ENCODE measurements at regions of chr10 and their contacts with region 1.

Region 1: DNA sequence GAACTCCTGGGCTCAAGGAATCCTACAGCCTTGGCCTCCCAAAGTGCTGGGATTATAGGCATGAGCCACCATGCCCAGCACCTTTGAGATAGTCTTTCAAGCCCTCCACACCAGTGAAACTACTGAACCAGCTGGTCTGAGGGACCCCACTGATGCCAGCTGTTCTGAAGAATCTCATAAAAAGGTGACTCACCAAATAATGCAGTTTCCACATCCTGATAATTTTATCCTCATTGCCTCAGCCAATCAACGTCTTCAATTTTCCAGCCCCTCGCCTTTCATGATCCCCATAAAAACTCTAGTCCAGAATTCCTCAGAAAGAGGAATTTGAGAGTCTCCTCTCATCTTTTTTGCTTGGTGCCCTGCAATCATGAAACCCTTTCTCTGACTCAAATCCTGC is 1691.6 kb upstream of the LRRTM3 start:
- DNase-seq: no peak
- ATAC-seq: no peak
- H3K4me3 ChIP-seq: no peak overlapping the region
- H3K27ac ChIP-seq: no peak overlapping the region
- H3K4me1 ChIP-seq: no peaks in the 10 kb centered on the region
- H3K27me3 ChIP-seq: no peaks in the 10 kb centered on the region
- CTCF ChIP-seq: no peak

Region 2: DNA sequence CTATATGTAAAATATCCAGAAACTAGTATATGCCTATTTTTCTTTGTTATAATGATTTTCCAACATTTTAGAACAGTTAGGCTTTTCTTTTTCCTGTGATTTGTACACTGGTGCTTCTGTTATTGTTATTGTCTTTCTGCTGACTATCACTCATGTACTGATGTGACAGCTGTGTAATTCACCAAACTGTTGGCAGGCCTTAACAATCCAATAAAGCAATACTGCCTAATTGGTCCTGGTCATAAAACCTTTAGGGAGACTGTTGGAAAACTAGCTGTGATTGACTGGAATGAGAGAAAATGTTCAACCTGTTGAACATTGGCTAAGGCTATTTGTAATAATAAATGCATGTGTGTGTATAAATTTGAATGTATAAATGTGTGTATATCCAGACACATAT is 756.5 kb before region 1 on chr10:
- CTCF ChIA-PET with region 1: no interaction called
- POLR2A ChIA-PET with region 1: interaction called, 16 read pairs
- in situ Hi-C with region 1: no loop called
- intact Hi-C with region 1: no loop called
- DNase-seq: no peak
- ATAC-seq: no peak
- H3K4me3 ChIP-seq: no peak overlapping the region
- H3K27ac ChIP-seq: no peak overlapping the region
- H3K4me1 ChIP-seq: no peaks in the 10 kb centered on the region
- H3K27me3 ChIP-seq: no peaks in the 10 kb centered on the region
- CTCF ChIP-seq: no peak

Measured in Panc1 (cell line).